ENCODE measurements at regions of chr19 and their contacts with region 1.

Region 1: DNA sequence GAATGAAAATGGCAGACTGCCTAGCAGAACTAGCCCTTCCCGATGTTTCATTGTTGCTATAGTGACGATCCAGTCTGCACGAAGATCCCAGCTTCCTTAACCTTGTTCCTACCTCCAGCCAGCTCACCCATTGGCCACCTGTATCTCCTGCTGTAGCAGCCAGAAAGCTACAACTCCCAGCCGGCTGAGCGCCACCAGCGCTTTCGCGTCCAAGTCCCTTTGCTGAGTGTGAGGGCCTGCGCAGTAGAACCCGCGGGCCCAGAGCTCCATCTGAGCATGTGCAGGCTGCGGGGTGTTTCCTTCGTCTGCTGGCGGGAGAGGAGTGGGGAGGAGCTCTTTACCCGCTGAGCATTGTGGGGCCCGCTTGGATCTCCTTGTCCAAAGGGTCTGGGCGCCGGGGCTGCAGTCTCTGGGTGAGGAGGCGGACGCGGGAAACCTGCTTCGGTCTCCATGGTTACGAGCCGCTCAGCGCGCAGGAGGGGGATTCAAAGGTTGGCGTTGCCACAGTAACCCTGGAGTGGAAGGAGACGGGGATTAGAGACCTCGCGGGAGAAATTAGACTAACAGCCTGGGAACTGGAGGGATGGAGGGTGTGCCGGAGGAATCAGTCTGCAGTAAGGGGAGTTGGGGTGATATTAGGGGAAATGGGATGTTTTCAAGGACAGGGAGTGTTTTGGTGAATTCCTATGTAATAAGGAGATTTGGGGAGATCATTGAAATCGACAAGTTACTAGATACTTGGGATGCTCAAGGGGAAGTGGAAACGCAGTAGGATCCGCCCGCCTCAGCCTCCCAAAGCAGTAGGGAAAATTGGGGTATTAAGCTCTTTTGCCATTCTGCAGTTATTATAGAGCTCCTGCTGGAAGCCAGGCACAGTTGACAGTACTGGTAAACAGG is 33.5 kb downstream of the ZSWIM9 start:
- DNase-seq: peak; percentile 84 to 95 (median 88)
- ATAC-seq: peak; percentile 100
- H3K4me3 ChIP-seq: peak overlapping the region; percentile 78
- H3K4me3 Mint-ChIP-seq: no peak overlapping the region
- H3K27ac ChIP-seq: peak overlapping the region; percentile 49 to 64
- H3K27ac Mint-ChIP-seq: no peak overlapping the region
- H3K4me1 ChIP-seq: peaks cover 33% of the 10 kb centered on the region
- H3K4me1 Mint-ChIP-seq: peaks cover 22% of the 10 kb centered on the region
- H3K27me3 ChIP-seq: no peaks in the 10 kb centered on the region
- H3K27me3 Mint-ChIP-seq: no peaks in the 10 kb centered on the region
- CTCF ChIP-seq: no peak

Region 2: DNA sequence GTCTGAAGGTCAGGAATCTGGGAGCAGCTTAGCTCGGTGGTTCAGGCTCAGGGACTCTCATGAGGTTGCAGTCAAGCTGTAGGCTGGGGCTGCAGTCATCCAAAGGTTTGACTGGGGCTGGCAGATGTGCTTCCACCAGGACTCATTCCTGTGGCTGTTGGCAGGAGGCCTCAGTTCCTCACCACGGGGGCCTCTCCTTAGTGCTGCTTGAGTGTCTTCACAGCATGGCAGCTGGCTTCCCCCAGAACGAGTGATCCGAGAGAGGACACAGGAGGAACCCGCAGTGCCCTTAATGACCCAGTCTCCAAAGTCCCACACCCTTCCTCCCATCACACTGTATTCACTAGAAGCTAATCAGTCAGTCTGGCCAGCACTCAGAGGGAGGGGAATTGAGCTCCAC is 529.4 kb before region 1 on chr19:
- CTCF ChIA-PET with region 1: no interaction called
- POLR2A ChIA-PET with region 1: no interaction called
- intact Hi-C with region 1: no loop called
- DNase-seq: no peak
- ATAC-seq: no peak
- H3K4me3 ChIP-seq: no peak overlapping the region
- H3K4me3 Mint-ChIP-seq: no peak overlapping the region
- H3K27ac ChIP-seq: no peak overlapping the region
- H3K27ac Mint-ChIP-seq: no peak overlapping the region
- H3K4me1 ChIP-seq: peaks cover 3% of the 10 kb centered on the region
- H3K4me1 Mint-ChIP-seq: no peaks in the 10 kb centered on the region
- H3K27me3 ChIP-seq: no peaks in the 10 kb centered on the region
- H3K27me3 Mint-ChIP-seq: no peaks in the 10 kb centered on the region
- CTCF ChIP-seq: no peak

Region 3: DNA sequence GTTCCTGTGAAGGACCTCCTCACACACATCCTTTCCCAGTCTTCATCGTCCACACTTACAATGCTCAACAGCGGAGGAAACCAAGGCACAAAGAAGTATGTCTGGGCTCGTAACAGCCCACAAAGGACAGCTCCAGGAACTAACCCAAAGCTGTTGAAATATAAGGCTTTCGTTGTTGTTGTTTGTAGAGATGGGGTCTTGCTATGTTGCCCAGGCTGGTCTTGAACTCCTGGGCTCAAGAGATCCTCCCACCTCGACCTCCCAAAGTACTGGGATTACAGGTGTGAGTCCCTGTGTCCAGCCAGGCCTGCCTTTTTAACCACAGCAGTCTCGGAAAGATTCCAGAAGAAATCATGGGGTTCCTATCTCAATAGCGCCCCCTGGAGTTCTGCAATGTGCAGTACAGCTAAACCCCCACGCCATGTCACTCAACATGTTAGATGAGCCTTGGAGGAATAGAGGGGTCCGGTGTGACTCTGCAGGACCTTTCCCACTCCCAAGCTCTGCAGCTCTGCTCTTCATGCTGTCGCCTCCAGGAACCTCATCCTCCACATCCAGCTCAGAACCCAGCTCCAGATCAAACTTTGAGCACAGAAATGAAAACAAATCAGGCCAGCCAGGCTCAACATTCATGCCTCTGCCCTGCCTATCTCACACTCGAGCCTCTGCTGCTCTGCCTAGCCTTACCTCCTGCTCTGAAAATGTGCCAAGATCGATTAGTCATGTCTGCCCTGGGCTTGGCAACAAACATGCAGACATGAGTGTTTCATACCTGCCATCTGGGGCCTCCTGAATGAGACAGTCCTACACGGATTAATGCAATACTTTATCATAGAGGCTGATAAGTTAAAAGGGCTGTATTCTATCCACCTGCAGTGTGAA is 100.9 kb before region 1 on chr19:
- CTCF ChIA-PET with region 1: no interaction called
- POLR2A ChIA-PET with region 1: no interaction called
- intact Hi-C with region 1: no loop called
- DNase-seq: peak in 11 of 14 experiments; percentile 5 to 66 (median 13)
- ATAC-seq: no peak
- H3K4me3 ChIP-seq: no peak overlapping the region
- H3K4me3 Mint-ChIP-seq: no peak overlapping the region
- H3K27ac ChIP-seq: no peak overlapping the region
- H3K27ac Mint-ChIP-seq: no peak overlapping the region
- H3K4me1 ChIP-seq: peaks cover 6% of the 10 kb centered on the region
- H3K4me1 Mint-ChIP-seq: peaks cover 7% of the 10 kb centered on the region
- H3K27me3 ChIP-seq: no peaks in the 10 kb centered on the region
- H3K27me3 Mint-ChIP-seq: no peaks in the 10 kb centered on the region
- CTCF ChIP-seq: peak; percentile 61

Region 4: DNA sequence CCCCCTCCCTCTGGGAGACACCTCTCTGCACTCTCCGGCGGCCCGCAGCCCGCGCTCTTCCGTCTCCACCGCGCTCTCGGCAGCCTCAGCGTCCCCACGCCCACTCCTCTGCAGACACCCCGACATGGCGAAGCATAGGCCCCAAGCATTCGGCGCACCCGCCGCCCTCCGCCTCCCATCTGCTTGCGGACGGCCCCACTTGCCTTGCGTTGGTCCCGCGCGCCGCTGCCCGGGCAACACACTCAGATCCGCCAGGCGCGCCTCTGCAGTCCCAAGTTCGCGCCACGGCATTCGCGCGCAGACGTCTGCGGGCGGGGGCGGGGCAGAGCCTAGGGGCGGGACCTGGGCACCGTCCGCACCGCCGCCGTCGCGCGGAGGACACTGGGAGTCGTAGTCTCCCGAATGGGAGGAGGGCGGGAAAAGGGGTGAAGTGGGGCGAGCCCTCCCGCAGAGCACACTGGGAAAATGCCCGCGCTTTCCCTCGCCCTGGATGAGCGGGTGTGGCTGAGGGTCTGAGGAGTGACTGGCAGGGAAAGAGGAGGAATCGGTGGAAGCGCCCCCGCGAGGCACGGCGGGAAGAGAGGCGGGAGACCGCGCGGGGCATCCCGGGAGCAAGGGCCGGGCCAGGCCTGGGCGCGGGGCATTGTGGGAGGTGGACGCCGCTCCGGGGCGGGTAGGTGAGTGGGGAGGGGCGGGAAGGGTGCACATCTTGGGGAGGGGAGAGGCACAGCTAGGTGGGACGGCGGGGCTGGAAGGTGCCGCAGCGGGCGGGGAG is 33.8 kb before region 1 on chr19 and contains the starts of genes LIG1 and ZSWIM9:
- CTCF ChIA-PET with region 1: no interaction called
- POLR2A ChIA-PET with region 1: interaction called, 28 read pairs
- intact Hi-C with region 1: loop called (anchors 2 to 5 kb)
- DNase-seq: peak; percentile 82 to 96 (median 88)
- ATAC-seq: peak; percentile 81
- H3K4me3 ChIP-seq: peak within 1 kb of the TSS; percentile 88
- H3K4me3 Mint-ChIP-seq: peak within 1 kb of the TSS; percentile 97
- H3K27ac ChIP-seq: peak within 1 kb of the TSS; percentile 91 to 92
- H3K27ac Mint-ChIP-seq: peak within 1 kb of the TSS; percentile 98
- H3K4me1 ChIP-seq: peaks cover 16% of the 10 kb centered on the region
- H3K4me1 Mint-ChIP-seq: peaks cover 39% of the 10 kb centered on the region
- H3K27me3 ChIP-seq: no peaks in the 10 kb centered on the region
- H3K27me3 Mint-ChIP-seq: no peaks in the 10 kb centered on the region
- CTCF ChIP-seq: no peak
- total RNA-seq, gene LIG1: 62.8 to 70.7 TPM
- total RNA-seq, gene ZSWIM9: 2.5 to 3.1 TPM

Region 5: DNA sequence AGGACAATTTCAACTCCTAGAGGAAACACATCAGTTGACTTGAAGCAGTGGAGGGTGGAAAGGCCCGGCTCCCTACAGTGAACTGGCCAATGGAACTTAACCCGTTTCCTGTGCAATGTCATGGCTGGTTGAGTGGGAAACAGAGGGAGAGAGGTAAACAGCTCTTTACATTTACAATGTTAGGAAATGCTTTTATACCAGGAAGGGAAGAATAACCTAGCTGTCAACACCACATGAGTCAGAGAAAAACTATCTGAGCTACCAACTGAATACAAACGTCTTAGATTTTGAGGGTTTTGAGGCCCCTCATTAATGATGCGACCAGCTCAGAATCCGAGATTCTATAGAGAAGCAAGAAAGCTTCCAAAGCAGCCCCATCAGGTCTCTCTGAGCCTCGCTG is 15.0 kb after region 1 on chr19:
- CTCF ChIA-PET with region 1: interaction called, 3 read pairs
- POLR2A ChIA-PET with region 1: interaction called, 12 read pairs
- intact Hi-C with region 1: no loop called
- DNase-seq: no peak
- ATAC-seq: no peak
- H3K4me3 ChIP-seq: no peak overlapping the region
- H3K4me3 Mint-ChIP-seq: no peak overlapping the region
- H3K27ac ChIP-seq: no peak overlapping the region
- H3K27ac Mint-ChIP-seq: no peak overlapping the region
- H3K4me1 ChIP-seq: no peaks in the 10 kb centered on the region
- H3K4me1 Mint-ChIP-seq: peaks cover 4% of the 10 kb centered on the region
- H3K27me3 ChIP-seq: no peaks in the 10 kb centered on the region
- H3K27me3 Mint-ChIP-seq: no peaks in the 10 kb centered on the region
- CTCF ChIP-seq: no peak

Region 6: GRCh38 chr19:48249502-48250014 is 45.6 kb after region 1 on chr19:
- CTCF ChIA-PET with region 1: no interaction called
- POLR2A ChIA-PET with region 1: interaction called, 23 read pairs
- intact Hi-C with region 1: loop called in 1 of 2 experiments (anchors 5 kb)
- DNase-seq: peak; percentile 46 to 88 (median 68)
- ATAC-seq: peak; percentile 91
- H3K4me3 ChIP-seq: peak overlapping the region; percentile 67
- H3K4me3 Mint-ChIP-seq: peak overlapping the region; percentile 93
- H3K27ac ChIP-seq: peak overlapping the region; percentile 91 to 94
- H3K27ac Mint-ChIP-seq: peak overlapping the region; percentile 99
- H3K4me1 ChIP-seq: peaks cover 63% of the 10 kb centered on the region
- H3K4me1 Mint-ChIP-seq: peaks cover 86% of the 10 kb centered on the region
- H3K27me3 ChIP-seq: no peaks in the 10 kb centered on the region
- H3K27me3 Mint-ChIP-seq: no peaks in the 10 kb centered on the region
- CTCF ChIP-seq: no peak

Region 7: GRCh38 chr19:49896863-49897621 is 1693.1 kb after region 1 on chr19 and contains the start of gene IL4I1:
- CTCF ChIA-PET with region 1: no interaction called
- POLR2A ChIA-PET with region 1: no interaction called
- intact Hi-C with region 1: no loop called
- DNase-seq: peak; percentile 31 to 94 (median 51)
- ATAC-seq: peak; percentile 71
- H3K4me3 ChIP-seq: peak within 1 kb of the TSS; percentile 48
- H3K4me3 Mint-ChIP-seq: peak within 1 kb of the TSS; percentile 85
- H3K27ac ChIP-seq: peak within 1 kb of the TSS; percentile 80 to 99
- H3K27ac Mint-ChIP-seq: peak within 1 kb of the TSS; percentile 95
- H3K4me1 ChIP-seq: peaks cover 46% of the 10 kb centered on the region
- H3K4me1 Mint-ChIP-seq: peaks cover 37% of the 10 kb centered on the region
- H3K27me3 ChIP-seq: no peaks in the 10 kb centered on the region
- H3K27me3 Mint-ChIP-seq: no peaks in the 10 kb centered on the region
- CTCF ChIP-seq: no peak
- total RNA-seq, gene IL4I1: 4.7 to 5.4 TPM

Measured in CD4-positive, alpha-beta T cell (primary cell).